ENCODE measurements at regions of chr1 and their contacts with region 1.

Region 1: GRCh38 chr1:119885903-119886783 is 10.2 kb downstream of the ADAM30 start:
- DNase-seq: peak in 1 of 2 experiments; percentile 88
- H3K4me3 ChIP-seq: no peak overlapping the region
- H3K27ac ChIP-seq: no peak overlapping the region
- H3K4me1 ChIP-seq: no peaks in the 10 kb centered on the region
- H3K27me3 ChIP-seq: no peaks in the 10 kb centered on the region
- CTCF ChIP-seq: peak; percentile 82 to 94 (median 88)
- EP300 ChIP-seq: no peak
- POLR2A ChIP-seq: no peak
- RAD21 ChIP-seq: peak; percentile 72 to 79

Region 2: DNA sequence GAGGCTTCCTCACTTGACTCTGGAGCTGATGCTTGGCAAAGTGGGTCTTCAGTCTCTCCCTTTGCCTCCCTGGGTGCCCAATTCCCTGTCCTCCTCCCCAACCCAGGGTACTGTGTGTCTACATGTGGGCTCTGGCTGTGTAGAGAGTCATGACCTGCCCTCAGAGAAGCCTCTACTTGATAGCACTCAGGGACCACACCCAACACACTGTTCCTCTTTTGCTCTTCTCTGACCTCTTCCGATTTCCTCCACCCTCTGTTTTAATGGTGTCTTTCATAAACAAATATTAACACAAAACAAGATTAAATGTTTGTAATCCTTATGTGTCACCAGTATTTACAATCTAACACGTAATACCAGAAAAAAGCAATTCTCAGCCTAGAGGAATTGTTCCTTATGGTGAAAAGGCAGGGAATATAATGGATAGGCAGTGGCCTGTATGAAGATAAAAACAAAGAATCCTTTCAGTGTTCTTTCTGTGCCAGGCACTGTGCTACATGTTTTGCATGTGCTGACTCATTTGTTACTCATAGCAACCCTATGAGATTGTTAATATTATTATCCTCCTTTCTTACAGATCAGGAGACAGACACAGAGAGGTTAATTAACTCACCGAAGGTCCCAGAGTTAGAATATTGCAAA is 320.9 kb before region 1 on chr1:
- CTCF ChIA-PET with region 1: no interaction called
- POLR2A ChIA-PET with region 1: no interaction called
- DNase-seq: no peak
- H3K4me3 ChIP-seq: no peak overlapping the region
- H3K27ac ChIP-seq: no peak overlapping the region
- H3K4me1 ChIP-seq: no peaks in the 10 kb centered on the region
- H3K27me3 ChIP-seq: no peaks in the 10 kb centered on the region; a peak in 1 of 7 replicates
- CTCF ChIP-seq: no peak
- EP300 ChIP-seq: no peak
- POLR2A ChIP-seq: no peak
- RAD21 ChIP-seq: no peak

Region 3: DNA sequence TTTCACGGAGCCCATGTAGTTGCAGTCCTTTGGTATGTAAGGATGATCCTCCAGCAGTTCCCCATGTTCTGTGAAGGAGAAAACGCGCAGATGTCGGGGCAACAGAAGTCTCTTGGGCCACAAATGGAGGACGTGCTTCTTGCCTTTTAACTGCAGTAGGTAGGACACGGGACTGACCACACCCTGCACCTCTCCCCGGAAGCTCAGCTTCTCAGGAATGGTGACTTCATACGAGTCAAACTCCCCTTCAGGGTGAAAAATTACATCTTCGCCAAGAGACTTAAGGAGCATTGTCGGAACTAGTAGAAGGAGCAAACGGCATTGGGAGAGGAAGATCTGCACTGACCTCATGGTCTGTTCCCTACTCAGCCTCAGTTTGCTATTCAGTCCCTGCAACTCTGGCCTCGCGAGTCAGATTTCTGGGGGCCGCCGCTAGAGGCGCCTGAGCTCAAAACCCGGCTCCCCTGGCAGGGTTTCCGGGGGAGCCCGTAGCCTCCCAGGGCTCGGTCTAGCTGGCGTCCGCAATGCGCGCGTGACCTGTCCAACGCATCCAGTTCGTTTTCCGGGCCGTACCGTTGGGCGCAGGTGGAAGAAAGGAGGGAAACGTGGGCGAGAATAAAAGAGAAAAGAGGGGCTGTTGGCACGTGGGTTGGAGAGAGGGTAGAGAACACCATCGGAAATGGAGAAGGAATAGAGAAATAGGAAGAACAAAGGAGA is 10.0 kb after region 1 on chr1 and contains the start of gene ADAM30:
- CTCF ChIA-PET with region 1: interaction called, 26 read pairs
- POLR2A ChIA-PET with region 1: no interaction called
- DNase-seq: peak in 1 of 2 experiments; percentile 86
- H3K4me3 ChIP-seq: 0 out of 8 replicates have a peak within 1 kb of the TSS, but pooled peaks of 1 of the 4 experiments have one; percentile 4
- H3K27ac ChIP-seq: no peak within 1 kb of the TSS
- H3K4me1 ChIP-seq: no peaks in the 10 kb centered on the region
- H3K27me3 ChIP-seq: peaks cover 0 to 8% (median 7%) of the 10 kb centered on the region in 4 experiments; a peak in 6 of 7 replicates
- CTCF ChIP-seq: peak; percentile 63 to 67 (median 65)
- EP300 ChIP-seq: no peak
- POLR2A ChIP-seq: no peak
- RAD21 ChIP-seq: peak; percentile 28 to 56; a peak in 2 of 4 replicates
- total RNA-seq, gene ADAM30: not detected in 2 replicates

Region 4: DNA sequence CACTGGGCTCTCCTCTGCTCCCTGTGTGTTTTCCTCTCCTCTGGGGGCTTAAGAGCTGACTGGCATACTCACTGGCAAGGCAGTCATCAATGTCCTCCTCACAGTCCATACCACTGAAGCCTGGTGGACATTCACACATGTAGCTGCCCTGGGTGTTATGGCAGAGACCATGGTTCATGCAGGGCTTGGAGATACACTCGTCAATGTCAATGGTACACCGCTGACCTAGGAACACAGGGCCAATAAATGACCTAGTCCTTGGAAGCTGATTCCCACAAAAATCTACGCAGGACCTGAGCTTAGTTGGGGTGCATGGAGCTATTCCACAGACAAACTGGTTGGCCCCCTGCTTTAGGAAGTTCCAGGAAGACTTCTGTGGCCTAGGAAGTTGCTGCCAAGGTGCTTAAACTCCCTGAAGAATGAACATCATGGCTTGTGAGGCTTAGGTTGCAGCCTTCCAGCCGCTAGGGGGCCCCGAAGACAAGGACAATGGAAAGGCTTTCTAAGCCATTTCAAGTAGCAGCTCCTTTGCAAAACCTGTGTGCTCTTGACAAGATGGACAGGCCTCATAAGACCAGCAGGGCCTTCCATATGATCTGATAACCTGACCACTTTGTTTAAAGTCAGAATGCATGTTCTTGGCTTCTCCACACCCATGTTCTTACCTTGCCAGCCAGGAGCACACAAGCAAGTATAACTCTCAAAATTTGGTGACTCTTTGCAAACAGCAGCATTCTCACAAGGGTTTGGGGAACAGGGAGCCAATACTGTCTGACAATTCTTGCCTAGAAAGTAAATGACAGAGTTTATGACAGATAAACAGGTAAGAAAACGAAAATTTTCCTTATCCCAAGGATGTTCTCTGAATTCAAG is 62.4 kb after region 1 on chr1:
- CTCF ChIA-PET with region 1: interaction called, 11 read pairs
- POLR2A ChIA-PET with region 1: no interaction called
- DNase-seq: peak; percentile 57 to 86
- H3K4me3 ChIP-seq: no peak overlapping the region
- H3K27ac ChIP-seq: no peak overlapping the region
- H3K4me1 ChIP-seq: no peaks in the 10 kb centered on the region
- H3K27me3 ChIP-seq: no peaks in the 10 kb centered on the region
- CTCF ChIP-seq: peak; percentile 72 to 95 (median 89)
- EP300 ChIP-seq: no peak
- POLR2A ChIP-seq: no peak
- RAD21 ChIP-seq: peak; percentile 88 to 93

Measured in H1 (cell line).